SK-N-SH (cell line): ENCODE measurements at regions of chr20 and their contacts with region 1.

Region 1: GRCh38 chr20:9616833-9617489 is 102.6 kb downstream of the LAMP5 start:
- DNase-seq: peak; percentile 52
- H3K4me3 ChIP-seq: peak overlapping the region in 1 of 2 experiments; percentile 13; a peak in 1 of 4 replicates
- H3K27ac ChIP-seq: no peak overlapping the region
- H3K4me1 ChIP-seq: peaks cover 0 to 8% of the 10 kb centered on the region in 2 experiments; a peak in 2 of 4 replicates
- H3K27me3 ChIP-seq: no peaks in the 10 kb centered on the region
- CTCF ChIP-seq: peak; percentile 93
- EP300 ChIP-seq: no peak
- RAD21 ChIP-seq: peak; percentile 94

Region 2: GRCh38 chr20:9632991-9633390 is 16.0 kb after region 1 on chr20:
- CTCF ChIA-PET with region 1: interaction called, 24 read pairs
- POLR2A ChIA-PET with region 1: no interaction called
- DNase-seq: no peak
- H3K4me3 ChIP-seq: no peak overlapping the region
- H3K27ac ChIP-seq: no peak overlapping the region
- H3K4me1 ChIP-seq: no peaks in the 10 kb centered on the region
- H3K27me3 ChIP-seq: no peaks in the 10 kb centered on the region
- CTCF ChIP-seq: no peak
- EP300 ChIP-seq: no peak
- RAD21 ChIP-seq: no peak

Region 3: DNA sequence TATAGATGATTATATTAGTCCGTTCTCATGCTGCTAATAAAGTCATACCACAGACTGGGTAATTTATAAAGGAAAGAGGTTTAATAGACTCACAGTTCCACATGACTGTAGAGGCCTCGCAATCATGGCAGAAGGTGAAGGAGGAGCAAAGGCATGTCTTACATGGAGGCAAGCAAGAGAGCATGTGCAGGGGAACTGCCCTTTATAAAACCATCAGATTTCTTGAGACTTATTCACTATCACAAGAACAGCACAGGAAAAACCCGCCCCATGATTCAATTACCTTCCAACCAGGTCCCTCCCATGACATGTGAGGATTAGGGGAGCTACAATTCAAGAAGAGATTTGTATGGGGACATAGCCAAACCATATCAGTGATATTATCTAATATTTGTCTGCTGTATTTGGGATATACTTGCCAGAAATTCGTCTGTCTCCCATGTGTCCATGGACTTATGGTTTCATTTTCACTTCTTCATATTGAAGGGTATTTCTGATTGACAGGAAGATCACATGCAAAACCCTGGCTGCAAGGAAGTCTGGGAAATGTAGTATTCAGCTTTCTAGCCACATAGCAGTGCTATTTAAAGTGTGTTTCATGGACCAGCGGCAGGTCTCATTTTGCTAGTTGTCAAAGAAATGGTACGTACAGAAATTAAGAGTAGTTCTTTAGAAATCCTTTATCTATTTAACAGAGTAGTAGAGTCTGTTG is 272.5 kb after region 1 on chr20:
- CTCF ChIA-PET with region 1: interaction called, 93 read pairs
- POLR2A ChIA-PET with region 1: no interaction called
- DNase-seq: no peak
- H3K4me3 ChIP-seq: no peak overlapping the region
- H3K27ac ChIP-seq: no peak overlapping the region
- H3K4me1 ChIP-seq: no peaks in the 10 kb centered on the region
- H3K27me3 ChIP-seq: no peaks in the 10 kb centered on the region
- CTCF ChIP-seq: no peak
- EP300 ChIP-seq: no peak
- RAD21 ChIP-seq: no peak

Region 4: GRCh38 chr20:9919271-9920014 is 302.5 kb after region 1 on chr20:
- CTCF ChIA-PET with region 1: interaction called, 113 read pairs
- POLR2A ChIA-PET with region 1: no interaction called
- DNase-seq: no peak
- H3K4me3 ChIP-seq: no peak overlapping the region
- H3K27ac ChIP-seq: no peak overlapping the region
- H3K4me1 ChIP-seq: no peaks in the 10 kb centered on the region
- H3K27me3 ChIP-seq: no peaks in the 10 kb centered on the region; the same call in 1 of the 2 replicates
- CTCF ChIP-seq: no peak
- EP300 ChIP-seq: no peak
- RAD21 ChIP-seq: no peak

Region 5: GRCh38 chr20:10427060-10427692 is 810.2 kb after region 1 on chr20:
- CTCF ChIA-PET with region 1: interaction called, 19 read pairs
- POLR2A ChIA-PET with region 1: no interaction called
- DNase-seq: peak; percentile 51
- H3K4me3 ChIP-seq: no peak overlapping the region; a peak in 1 of 4 replicates
- H3K27ac ChIP-seq: no peak overlapping the region
- H3K4me1 ChIP-seq: peaks cover 5 to 8% of the 10 kb centered on the region in 2 experiments; a peak in 3 of 4 replicates
- H3K27me3 ChIP-seq: no peaks in the 10 kb centered on the region
- CTCF ChIP-seq: peak; percentile 98
- EP300 ChIP-seq: no peak
- RAD21 ChIP-seq: peak; percentile 80